Dorsolateral prefrontal cortex (tissue), 120 donors: ENCODE measurements at regions of chr14 and their contacts with region 1.

Region 1: GRCh38 chr14:51507906-51508511 is 143.7 kb upstream of the FRMD6 start:
- DNase-seq: peak; percentile 15 to 70 (median 56)
- H3K4me3 ChIP-seq: peak overlapping the region in 4 of 59 donors; percentile 22 to 33 (median 28)
- H3K27ac ChIP-seq: peak overlapping the region in 51 of 59 donors; percentile 1 to 85 (median 61)
- H3K27me3 ChIP-seq: no peaks in the 10 kb centered on the region
- CTCF ChIP-seq: no peak

Region 2: GRCh38 chr14:51651388-51652167 is 143.6 kb after region 1 on chr14 and contains the start of gene FRMD6:
- intact Hi-C with region 1: loop called in 1 of 2 experiments (anchors 5 kb)
- DNase-seq: peak; percentile 57 to 84 (median 70)
- H3K4me3 ChIP-seq: peak within 1 kb of the TSS; percentile 70 to 98 (median 90)
- H3K27ac ChIP-seq: peak within 1 kb of the TSS; percentile 75 to 99 (median 96)
- H3K27me3 ChIP-seq: no peaks in the 10 kb centered on the region
- CTCF ChIP-seq: peak in 54 of 56 donors; percentile 24 to 75 (median 57)
- total RNA-seq, gene FRMD6: 9.1 to 40.7 (median 19.1) TPM